Calu3 (cell line): ENCODE measurements at regions of chr18 and their contacts with region 1.

Region 1: GRCh38 chr18:51153659-51154371 is 43.7 kb downstream of the MEX3C start:
- DNase-seq: no peak
- H3K4me3 Mint-ChIP-seq: no peak overlapping the region
- H3K27ac Mint-ChIP-seq: no peak overlapping the region
- H3K4me1 Mint-ChIP-seq: peaks cover 17% of the 10 kb centered on the region
- H3K27me3 Mint-ChIP-seq: no peaks in the 10 kb centered on the region
- CTCF ChIP-seq: no peak

Region 2: GRCh38 chr18:51133580-51134160 is 20.1 kb before region 1 on chr18:
- CTCF ChIA-PET with region 1: no interaction called
- intact Hi-C with region 1: no loop called
- DNase-seq: no peak
- H3K4me3 Mint-ChIP-seq: no peak overlapping the region
- H3K27ac Mint-ChIP-seq: no peak overlapping the region
- H3K4me1 Mint-ChIP-seq: peaks cover 10% of the 10 kb centered on the region
- H3K27me3 Mint-ChIP-seq: no peaks in the 10 kb centered on the region
- CTCF ChIP-seq: no peak

Region 3: GRCh38 chr18:51491661-51492372 is 338.0 kb after region 1 on chr18:
- CTCF ChIA-PET with region 1: interaction called, 11 read pairs
- intact Hi-C with region 1: no loop called
- DNase-seq: no peak
- H3K4me3 Mint-ChIP-seq: no peak overlapping the region
- H3K27ac Mint-ChIP-seq: no peak overlapping the region
- H3K4me1 Mint-ChIP-seq: no peaks in the 10 kb centered on the region
- H3K27me3 Mint-ChIP-seq: peaks cover 35% of the 10 kb centered on the region
- CTCF ChIP-seq: no peak